ENCODE measurements at regions of chr2 and their contacts with region 1.

Region 1: GRCh38 chr2:121041516-121041915 is 243.5 kb downstream of the TFCP2L1 start:
- DNase-seq: no peak
- ATAC-seq: no peak
- H3K4me3 ChIP-seq: no peak overlapping the region
- H3K27ac ChIP-seq: no peak overlapping the region
- H3K4me1 ChIP-seq: peaks cover 11% of the 10 kb centered on the region
- H3K27me3 ChIP-seq: no peaks in the 10 kb centered on the region
- CTCF ChIP-seq: no peak

Region 2: DNA sequence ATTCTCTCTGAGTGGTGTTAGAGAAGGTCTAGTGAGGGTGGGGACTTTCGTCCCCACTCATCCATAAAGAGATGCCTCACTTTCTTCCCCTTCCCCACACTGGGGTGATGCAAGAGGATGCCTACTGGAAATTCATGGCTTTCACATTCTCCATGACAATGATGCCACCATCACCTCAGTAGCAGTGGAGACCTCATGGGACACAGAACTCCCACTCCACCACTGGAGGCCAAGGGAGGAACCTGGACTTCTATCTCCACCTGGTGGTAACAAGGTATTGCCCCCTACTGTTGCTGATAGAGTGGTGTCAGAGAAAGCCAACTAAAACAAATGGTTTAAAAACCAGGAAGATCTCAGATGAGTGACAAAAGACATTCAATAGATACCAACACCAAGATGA is 584.6 kb before region 1 on chr2:
- CTCF ChIA-PET with region 1: no interaction called
- POLR2A ChIA-PET with region 1: no interaction called
- intact Hi-C with region 1: no loop called
- DNase-seq: peak; percentile 55
- ATAC-seq: peak; percentile 48; the same call in 1 of the 2 replicates
- H3K4me3 ChIP-seq: no peak overlapping the region
- H3K27ac ChIP-seq: no peak overlapping the region
- H3K4me1 ChIP-seq: peaks cover 16% of the 10 kb centered on the region
- H3K27me3 ChIP-seq: no peaks in the 10 kb centered on the region
- CTCF ChIP-seq: peak; percentile 69

Region 3: GRCh38 chr2:120983344-120983743 is 58.2 kb before region 1 on chr2:
- CTCF ChIA-PET with region 1: no interaction called
- POLR2A ChIA-PET with region 1: no interaction called
- intact Hi-C with region 1: no loop called
- DNase-seq: no peak
- ATAC-seq: no peak
- H3K4me3 ChIP-seq: no peak overlapping the region
- H3K27ac ChIP-seq: no peak overlapping the region
- H3K4me1 ChIP-seq: no peaks in the 10 kb centered on the region
- H3K27me3 ChIP-seq: no peaks in the 10 kb centered on the region
- CTCF ChIP-seq: no peak

Region 4: DNA sequence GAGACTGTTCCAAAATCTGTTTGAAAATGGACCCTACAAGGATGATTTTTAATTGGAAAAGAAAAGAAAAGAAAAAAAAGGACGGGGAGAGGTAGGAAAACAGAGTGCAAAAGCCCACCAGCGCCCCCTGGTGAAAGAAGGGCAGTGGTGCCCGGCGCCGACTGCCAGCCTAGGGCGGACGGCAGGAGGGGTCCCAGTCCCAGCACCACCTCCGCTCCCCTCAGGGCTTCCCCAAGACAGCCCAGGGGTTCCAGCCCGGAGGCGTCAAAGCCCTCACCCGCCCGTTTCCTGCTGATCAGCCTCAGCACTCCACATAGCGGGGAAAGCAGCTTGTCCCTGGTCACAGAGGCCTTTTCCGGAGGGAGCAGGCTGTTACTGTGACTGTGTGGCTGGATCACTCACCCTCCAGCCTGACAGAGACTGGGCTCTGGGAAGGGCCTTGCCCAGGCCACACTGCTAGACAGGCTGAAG is 29.6 kb after region 1 on chr2:
- CTCF ChIA-PET with region 1: no interaction called
- POLR2A ChIA-PET with region 1: interaction called, 19 read pairs
- intact Hi-C with region 1: no loop called
- DNase-seq: peak; percentile 75
- ATAC-seq: peak; percentile 51
- H3K4me3 ChIP-seq: no peak overlapping the region
- H3K27ac ChIP-seq: no peak overlapping the region
- H3K4me1 ChIP-seq: peaks cover 14% of the 10 kb centered on the region
- H3K27me3 ChIP-seq: no peaks in the 10 kb centered on the region
- CTCF ChIP-seq: peak; percentile 94